Common myeloid progenitor, CD34-positive (primary cell): ENCODE measurements at regions of chr1 and their contacts with region 1.

Region 1: GRCh38 chr1:58702261-58703141 is 2.6 kb upstream of the MYSM1 start:
- DNase-seq: no peak
- H3K4me3 ChIP-seq: no peak overlapping the region
- H3K27ac ChIP-seq: no peak overlapping the region
- H3K4me1 ChIP-seq: peaks cover 9 to 12% (median 11%) of the 10 kb centered on the region in 4 experiments
- H3K27me3 ChIP-seq: no peaks in the 10 kb centered on the region

Region 2: DNA sequence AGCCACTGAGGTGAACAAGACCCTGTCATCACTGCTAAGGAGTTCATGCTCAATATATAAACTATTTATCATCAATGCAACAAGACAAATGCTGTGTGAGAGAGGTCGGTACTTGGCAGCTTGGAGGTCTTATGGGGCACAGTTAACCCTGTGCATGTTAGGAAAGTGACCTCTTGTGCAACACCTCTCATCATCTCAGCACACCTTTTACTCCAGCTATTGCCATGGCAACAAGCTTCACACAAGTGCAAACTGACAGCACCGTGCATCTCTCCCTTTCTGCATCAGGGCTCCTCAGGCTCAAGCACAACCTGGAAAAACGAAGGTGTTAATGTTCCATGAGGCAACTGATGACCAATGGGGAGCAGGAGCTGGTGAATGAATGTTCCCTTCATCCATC is 12.0 kb after region 1 on chr1:
- CTCF ChIA-PET with region 1: interaction called, 14 read pairs
- POLR2A ChIA-PET with region 1: no interaction called
- DNase-seq: no peak
- H3K4me3 ChIP-seq: no peak overlapping the region
- H3K27ac ChIP-seq: no peak overlapping the region
- H3K4me1 ChIP-seq: peaks cover 8 to 32% (median 20%) of the 10 kb centered on the region in 4 experiments
- H3K27me3 ChIP-seq: no peaks in the 10 kb centered on the region

Region 3: GRCh38 chr1:58727363-58727762 is 24.9 kb after region 1 on chr1:
- CTCF ChIA-PET with region 1: no interaction called
- POLR2A ChIA-PET with region 1: no interaction called
- DNase-seq: peak in 1 of 3 donors; percentile 26
- H3K4me3 ChIP-seq: no peak overlapping the region
- H3K27ac ChIP-seq: no peak overlapping the region
- H3K4me1 ChIP-seq: peaks cover 3 to 15% (median 9%) of the 10 kb centered on the region in 4 experiments
- H3K27me3 ChIP-seq: no peaks in the 10 kb centered on the region